Endothelial cell of umbilical vein (primary cell): ENCODE measurements at regions of chr6 and their contacts with region 1.

Region 1: DNA sequence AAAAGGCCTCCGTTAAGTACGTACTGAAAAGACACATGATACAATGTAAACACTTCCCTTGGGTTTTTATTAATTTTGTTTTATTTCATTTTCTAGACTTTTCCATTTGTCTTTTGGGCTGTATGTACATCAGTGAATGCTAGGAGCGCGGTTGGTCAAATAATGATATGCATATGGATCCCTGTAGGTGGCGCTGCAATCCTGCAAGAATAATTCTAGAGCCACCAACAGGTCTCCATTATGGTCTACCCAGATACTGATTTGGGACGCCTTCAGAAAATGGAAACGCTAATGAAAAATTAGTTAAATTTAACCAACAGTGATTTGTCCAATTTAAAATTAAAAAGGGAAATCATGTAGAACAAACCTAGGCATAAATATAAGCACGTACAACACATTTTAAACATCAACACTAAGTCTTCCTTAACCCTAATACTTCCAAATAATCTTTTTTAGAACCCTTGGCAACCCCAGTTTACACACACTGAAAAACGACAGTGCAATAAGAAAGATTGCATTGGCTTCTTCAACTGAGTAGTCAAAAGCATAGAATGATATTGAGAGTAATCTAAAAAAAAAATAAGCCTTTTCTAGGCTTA is 433.5 kb downstream of the RFPL4B start:
- DNase-seq: peak; percentile 87
- H3K4me3 ChIP-seq: no peak overlapping the region
- H3K27ac ChIP-seq: peak overlapping the region; percentile 19
- H3K4me1 ChIP-seq: peaks cover 6% of the 10 kb centered on the region
- H3K27me3 ChIP-seq: no peaks in the 10 kb centered on the region
- CTCF ChIP-seq: peak; percentile 53 to 67
- POLR2A ChIP-seq: no peak

Region 2: DNA sequence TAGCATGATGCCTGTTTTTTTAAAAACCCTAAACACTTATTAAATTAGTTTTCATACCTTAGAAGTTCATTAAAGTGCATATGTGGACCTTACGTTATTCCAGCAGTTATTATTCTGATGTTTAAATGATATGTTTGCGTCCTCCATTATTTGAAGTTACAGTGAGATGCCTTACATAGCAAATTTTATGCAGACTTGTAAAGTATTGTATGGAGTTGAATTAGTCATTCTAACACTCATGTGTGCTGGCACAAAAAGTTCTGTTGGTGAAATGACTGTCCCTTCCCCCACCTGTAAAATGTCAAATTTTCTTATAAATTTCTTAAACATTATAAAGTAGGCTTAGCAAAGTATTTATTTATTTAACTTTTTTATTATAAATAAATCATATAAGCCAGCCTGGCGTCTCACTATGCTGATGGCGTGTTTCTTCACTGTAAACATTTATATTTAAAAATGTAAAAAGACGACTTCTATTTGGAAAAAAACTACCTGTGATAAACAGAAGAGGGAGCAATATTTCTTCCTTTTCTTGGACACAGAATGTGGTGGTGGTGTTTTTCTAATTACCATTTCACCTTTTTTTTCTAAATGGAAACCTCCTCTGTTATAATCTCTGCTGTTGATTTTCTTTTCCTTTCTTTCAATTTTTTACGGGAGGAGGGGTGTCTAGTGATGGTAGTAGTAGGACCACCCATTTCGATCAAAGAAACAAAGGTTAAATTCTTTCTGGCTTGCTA is 278.1 kb before region 1 on chr6:
- CTCF ChIA-PET with region 1: interaction called, 5 read pairs
- POLR2A ChIA-PET with region 1: no interaction called
- dilution Hi-C with region 1: no loop called
- intact Hi-C with region 1: loop called (anchors 1 kb)
- DNase-seq: peak; percentile 34
- H3K4me3 ChIP-seq: no peak overlapping the region
- H3K27ac ChIP-seq: no peak overlapping the region
- H3K4me1 ChIP-seq: peaks cover 2% of the 10 kb centered on the region
- H3K27me3 ChIP-seq: no peaks in the 10 kb centered on the region
- CTCF ChIP-seq: peak; percentile 23 to 24
- POLR2A ChIP-seq: no peak

Region 3: GRCh38 chr6:112651239-112651638 is 129.4 kb before region 1 on chr6:
- CTCF ChIA-PET with region 1: no interaction called
- POLR2A ChIA-PET with region 1: no interaction called
- dilution Hi-C with region 1: no loop called
- intact Hi-C with region 1: no loop called
- DNase-seq: no peak
- H3K4me3 ChIP-seq: no peak overlapping the region
- H3K27ac ChIP-seq: no peak overlapping the region
- H3K4me1 ChIP-seq: peaks cover 25% of the 10 kb centered on the region
- H3K27me3 ChIP-seq: no peaks in the 10 kb centered on the region
- CTCF ChIP-seq: no peak
- POLR2A ChIP-seq: no peak

Region 4: DNA sequence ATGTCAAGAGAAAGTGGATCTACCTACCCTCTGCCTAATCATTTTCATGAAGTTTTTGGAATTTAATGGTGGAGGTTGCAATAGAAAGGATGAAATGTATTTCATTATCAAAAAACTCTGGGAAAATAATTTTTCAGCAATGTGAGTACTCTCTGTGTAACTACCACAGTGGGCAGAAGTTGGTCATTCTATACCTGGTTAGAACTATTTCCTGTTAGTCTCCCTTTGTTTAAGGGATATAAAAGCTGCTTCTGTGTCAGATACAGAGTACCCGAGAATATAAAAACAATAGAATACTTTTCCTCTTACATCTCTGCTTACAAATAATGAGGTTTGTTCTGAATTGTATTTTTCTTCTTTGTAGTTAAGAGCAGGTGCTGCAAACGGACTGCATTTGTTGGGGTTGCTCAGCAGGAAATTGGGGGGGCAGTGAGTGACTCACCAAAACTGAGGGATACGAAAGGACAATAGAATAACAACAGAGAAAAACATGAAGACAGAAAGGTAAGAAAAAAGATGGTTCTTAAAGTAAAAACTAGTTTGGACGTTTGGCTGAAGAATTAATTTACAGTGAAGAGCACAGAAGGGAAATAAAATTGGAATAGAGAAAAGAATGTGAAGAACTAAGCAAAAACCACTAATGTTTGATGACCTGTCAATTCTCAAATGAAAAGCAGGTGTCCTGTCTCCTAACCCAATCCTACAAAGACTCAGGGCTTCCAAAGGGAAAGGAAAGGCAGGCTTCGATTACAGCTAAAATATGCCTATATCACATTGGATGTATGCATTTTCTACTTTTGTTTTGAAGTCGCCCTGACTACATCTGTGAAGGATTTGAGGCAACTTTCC is 269.6 kb after region 1 on chr6:
- CTCF ChIA-PET with region 1: no interaction called
- POLR2A ChIA-PET with region 1: no interaction called
- dilution Hi-C with region 1: no loop called
- intact Hi-C with region 1: loop called (anchors 5 kb)
- DNase-seq: peak; percentile 92
- H3K4me3 ChIP-seq: no peak overlapping the region
- H3K27ac ChIP-seq: peak overlapping the region; percentile 74
- H3K4me1 ChIP-seq: peaks cover 29% of the 10 kb centered on the region
- H3K27me3 ChIP-seq: no peaks in the 10 kb centered on the region
- CTCF ChIP-seq: no peak
- POLR2A ChIP-seq: no peak

Region 5: GRCh38 chr6:113414511-113414910 is 633.9 kb after region 1 on chr6:
- CTCF ChIA-PET with region 1: no interaction called
- POLR2A ChIA-PET with region 1: no interaction called
- dilution Hi-C with region 1: no loop called
- intact Hi-C with region 1: loop called (anchors 2 kb)
- DNase-seq: peak; percentile 79
- H3K4me3 ChIP-seq: no peak overlapping the region
- H3K27ac ChIP-seq: no peak overlapping the region
- H3K4me1 ChIP-seq: peaks cover 9% of the 10 kb centered on the region
- H3K27me3 ChIP-seq: no peaks in the 10 kb centered on the region
- CTCF ChIP-seq: peak; percentile 55 to 57
- POLR2A ChIP-seq: no peak

Region 6: DNA sequence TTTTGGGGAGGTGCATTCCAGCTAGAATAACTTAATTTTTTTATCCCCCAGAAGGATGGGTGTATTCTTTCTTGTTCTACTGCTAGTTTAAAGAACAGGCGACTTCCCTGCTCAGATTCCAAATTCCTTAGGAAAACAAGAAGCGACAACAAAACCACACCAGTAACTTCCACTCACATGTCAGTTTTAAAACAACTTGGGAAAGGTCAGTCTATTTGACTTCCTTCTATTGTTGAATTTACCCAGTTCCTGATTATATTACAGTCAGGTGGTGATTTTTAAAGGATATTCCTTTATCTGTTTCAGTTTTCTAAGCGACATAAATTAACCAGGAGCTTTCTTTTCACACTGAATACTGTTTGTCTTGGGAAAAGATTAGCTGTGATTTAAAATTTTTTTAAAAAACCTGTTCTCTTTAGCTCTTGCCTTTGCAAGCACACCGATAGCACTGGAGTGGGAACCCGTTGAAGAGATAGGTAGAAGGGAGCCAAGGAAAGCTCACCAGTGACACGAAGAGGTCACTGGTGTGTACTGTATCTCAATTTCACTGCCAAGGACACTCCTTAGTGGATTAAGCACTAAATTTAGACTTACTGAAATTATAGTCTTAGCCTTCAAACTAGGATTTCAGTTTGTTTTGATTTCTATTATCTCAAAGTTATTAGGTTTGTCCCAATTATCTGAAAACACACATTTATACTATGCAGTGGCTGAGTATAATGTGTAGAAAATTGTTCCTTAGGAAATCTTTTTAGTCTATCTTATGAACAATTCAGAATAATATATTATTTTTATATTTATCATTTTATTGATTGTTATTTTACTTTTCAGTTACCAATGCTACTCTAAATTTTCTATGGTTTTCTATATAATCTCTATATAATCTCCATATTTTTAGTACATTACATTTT is 1098.8 kb after region 1 on chr6:
- CTCF ChIA-PET with region 1: interaction called, 15 read pairs
- POLR2A ChIA-PET with region 1: no interaction called
- dilution Hi-C with region 1: no loop called
- intact Hi-C with region 1: loop called (anchors 1 kb)
- DNase-seq: peak; percentile 91
- H3K4me3 ChIP-seq: peak overlapping the region in 1 of 3 experiments; percentile 69
- H3K27ac ChIP-seq: peak overlapping the region; percentile 63
- H3K4me1 ChIP-seq: peaks cover 9% of the 10 kb centered on the region
- H3K27me3 ChIP-seq: no peaks in the 10 kb centered on the region
- CTCF ChIP-seq: peak; percentile 68
- POLR2A ChIP-seq: no peak